Tibial artery (tissue), 4 donors: ENCODE measurements at regions of chr19 and their contacts with region 1.

Region 1: GRCh38 chr19:47130591-47131227 is at the start of gene SAE1:
- DNase-seq: peak; percentile 93 to 97
- H3K4me3 ChIP-seq: peak within 1 kb of the TSS; percentile 83 to 96
- H3K27ac ChIP-seq: peak within 1 kb of the TSS; percentile 94
- H3K4me1 ChIP-seq: peaks cover 0 to 30% (median 16%) of the 10 kb centered on the region in 4 donors
- H3K27me3 ChIP-seq: no peaks in the 10 kb centered on the region
- CTCF ChIP-seq: peak; percentile 46 to 48

Region 2: GRCh38 chr19:47075179-47075810 is 55.4 kb before region 1 on chr19:
- intact Hi-C with region 1: loop called (anchors 2 kb)
- DNase-seq: no peak
- H3K4me3 ChIP-seq: no peak overlapping the region
- H3K27ac ChIP-seq: no peak overlapping the region
- H3K4me1 ChIP-seq: peaks cover 0 to 9% (median 7%) of the 10 kb centered on the region in 4 donors
- H3K27me3 ChIP-seq: no peaks in the 10 kb centered on the region
- CTCF ChIP-seq: no peak

Region 3: DNA sequence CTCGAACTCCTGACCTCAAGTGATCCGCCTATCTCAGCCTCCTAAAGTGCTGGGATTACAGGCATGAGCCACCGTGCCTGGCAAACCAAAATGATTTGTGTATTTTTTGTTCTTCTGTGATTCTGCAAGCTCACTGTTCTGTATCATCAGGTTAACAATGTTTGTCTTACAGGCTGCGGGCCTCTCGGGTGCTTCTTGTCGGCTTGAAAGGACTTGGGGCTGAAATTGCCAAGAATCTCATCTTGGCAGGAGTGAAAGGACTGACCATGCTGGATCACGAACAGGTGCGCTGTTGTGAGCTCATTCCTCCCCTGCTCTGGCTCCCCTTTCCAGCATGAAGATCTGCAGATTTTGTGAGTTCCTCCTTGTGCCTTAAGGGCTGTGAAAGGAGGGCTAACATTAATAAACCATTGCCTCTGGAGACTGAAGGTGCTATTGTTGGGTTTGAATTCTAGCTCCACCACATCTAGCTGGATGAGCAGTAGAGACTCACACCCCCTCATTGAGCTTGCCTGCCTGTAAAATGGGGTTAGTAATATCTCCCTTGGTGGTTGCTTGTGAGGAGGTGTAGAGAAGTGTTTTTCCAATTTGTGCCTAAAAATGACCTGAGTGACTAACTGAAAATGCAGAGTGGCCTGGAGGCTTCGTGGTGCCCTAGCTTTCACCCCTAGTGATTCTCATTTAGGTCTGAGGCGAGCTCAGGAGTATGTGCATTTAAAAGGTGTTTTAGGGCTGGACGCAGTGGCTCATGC is 12.8 kb after region 1 on chr19:
- intact Hi-C with region 1: no loop called
- DNase-seq: no peak
- H3K4me3 ChIP-seq: no peak overlapping the region
- H3K27ac ChIP-seq: no peak overlapping the region
- H3K4me1 ChIP-seq: no peaks in the 10 kb centered on the region
- H3K27me3 ChIP-seq: no peaks in the 10 kb centered on the region
- CTCF ChIP-seq: no peak

Region 4: DNA sequence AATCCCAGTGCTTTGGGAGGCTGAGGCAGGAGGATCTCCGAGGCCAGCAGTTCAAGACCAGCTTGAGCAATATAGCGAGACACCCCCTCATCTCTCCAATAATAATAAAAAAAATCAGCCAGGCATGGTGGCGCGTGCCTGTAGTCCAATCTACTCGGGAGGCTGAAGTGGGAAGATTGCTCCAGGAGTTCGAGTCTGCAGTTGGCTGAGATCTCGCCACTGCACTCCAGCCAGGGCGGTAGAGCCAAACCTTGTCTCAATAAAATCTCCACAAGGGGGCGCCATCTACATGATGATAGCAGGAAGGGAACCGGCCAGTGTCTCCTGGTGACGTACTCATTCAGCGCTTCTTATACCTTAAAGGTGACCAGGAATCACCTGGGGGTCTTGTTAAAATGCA is 165.3 kb after region 1 on chr19:
- intact Hi-C with region 1: no loop called
- DNase-seq: peak in 1 of 2 donors; percentile 81
- H3K4me3 ChIP-seq: no peak overlapping the region
- H3K27ac ChIP-seq: no peak overlapping the region
- H3K4me1 ChIP-seq: no peaks in the 10 kb centered on the region
- H3K27me3 ChIP-seq: no peaks in the 10 kb centered on the region
- CTCF ChIP-seq: peak; percentile 74 to 80